Right cardiac atrium (tissue), 5 donors: ENCODE measurements at regions of chr11 and their contacts with region 1.

Region 1: GRCh38 chr11:59283825-59284772 is 71.4 kb upstream of the MPEG1 start:
- DNase-seq: no peak
- ATAC-seq: peak; percentile 22 to 55
- H3K4me3 ChIP-seq: no peak overlapping the region
- H3K27ac ChIP-seq: no peak overlapping the region
- H3K4me1 ChIP-seq: no peaks in the 10 kb centered on the region
- H3K27me3 ChIP-seq: no peaks in the 10 kb centered on the region

Region 2: GRCh38 chr11:59171508-59172322 is 112.4 kb before region 1 on chr11 and contains the start of gene DTX4:
- intact Hi-C with region 1: loop called in 3 of 4 experiments (anchors 1 to 5 kb)
- DNase-seq: peak; percentile 92 to 98 (median 97)
- ATAC-seq: peak; percentile 96 to 97
- H3K4me3 ChIP-seq: peak within 1 kb of the TSS; percentile 73
- H3K27ac ChIP-seq: peak within 1 kb of the TSS; percentile 2
- H3K4me1 ChIP-seq: no peaks in the 10 kb centered on the region
- H3K27me3 ChIP-seq: no peaks in the 10 kb centered on the region
- total RNA-seq, gene DTX4: 1.6 to 3.4 (median 1.7) TPM

Region 3: DNA sequence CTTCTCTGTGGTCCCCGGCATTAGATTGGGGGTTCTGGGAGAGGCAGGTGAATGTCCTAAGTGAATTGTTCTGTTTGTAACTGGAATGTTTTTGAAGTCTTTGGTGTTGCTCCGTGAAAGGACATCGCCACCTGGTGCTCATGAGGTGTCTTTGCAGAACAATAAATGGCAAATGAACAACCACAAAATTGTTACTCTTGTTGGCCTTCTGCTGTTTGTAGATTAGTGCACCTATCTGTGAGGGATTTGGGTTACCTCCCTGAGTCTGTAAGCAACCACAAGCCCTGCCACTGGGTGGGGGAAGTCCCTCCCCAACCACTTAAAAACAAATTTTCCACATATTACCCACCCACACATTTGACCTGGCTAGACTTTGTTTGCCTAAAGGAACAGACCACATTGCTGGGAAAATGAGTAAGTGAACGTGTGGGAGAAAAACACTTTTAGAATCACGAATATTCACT is 76.1 kb before region 1 on chr11:
- intact Hi-C with region 1: loop called in 3 of 4 experiments (anchors 10 kb)
- DNase-seq: peak in 2 of 3 donors; percentile 37 to 55
- ATAC-seq: peak; percentile 22 to 63
- H3K4me3 ChIP-seq: no peak overlapping the region
- H3K27ac ChIP-seq: no peak overlapping the region
- H3K4me1 ChIP-seq: no peaks in the 10 kb centered on the region
- H3K27me3 ChIP-seq: no peaks in the 10 kb centered on the region

Region 4: GRCh38 chr11:59216641-59217564 is 67.2 kb before region 1 on chr11:
- intact Hi-C with region 1: loop called in 1 of 4 experiments (anchors 10 kb)
- DNase-seq: peak in 1 of 3 donors; percentile 34
- ATAC-seq: peak in 1 of 2 donors; percentile 47
- H3K4me3 ChIP-seq: no peak overlapping the region
- H3K27ac ChIP-seq: no peak overlapping the region
- H3K4me1 ChIP-seq: no peaks in the 10 kb centered on the region
- H3K27me3 ChIP-seq: no peaks in the 10 kb centered on the region

Region 5: GRCh38 chr11:59240322-59240721 is 43.8 kb before region 1 on chr11:
- intact Hi-C with region 1: no loop called
- DNase-seq: no peak
- ATAC-seq: no peak
- H3K4me3 ChIP-seq: no peak overlapping the region
- H3K27ac ChIP-seq: no peak overlapping the region
- H3K4me1 ChIP-seq: no peaks in the 10 kb centered on the region
- H3K27me3 ChIP-seq: no peaks in the 10 kb centered on the region

Region 6: GRCh38 chr11:59335001-59335400 is 50.9 kb after region 1 on chr11:
- intact Hi-C with region 1: no loop called
- DNase-seq: no peak
- ATAC-seq: no peak
- H3K4me3 ChIP-seq: no peak overlapping the region
- H3K27ac ChIP-seq: no peak overlapping the region
- H3K4me1 ChIP-seq: no peaks in the 10 kb centered on the region
- H3K27me3 ChIP-seq: no peaks in the 10 kb centered on the region